ENCODE measurements at regions of chr11 and their contacts with region 1.

Region 1: DNA sequence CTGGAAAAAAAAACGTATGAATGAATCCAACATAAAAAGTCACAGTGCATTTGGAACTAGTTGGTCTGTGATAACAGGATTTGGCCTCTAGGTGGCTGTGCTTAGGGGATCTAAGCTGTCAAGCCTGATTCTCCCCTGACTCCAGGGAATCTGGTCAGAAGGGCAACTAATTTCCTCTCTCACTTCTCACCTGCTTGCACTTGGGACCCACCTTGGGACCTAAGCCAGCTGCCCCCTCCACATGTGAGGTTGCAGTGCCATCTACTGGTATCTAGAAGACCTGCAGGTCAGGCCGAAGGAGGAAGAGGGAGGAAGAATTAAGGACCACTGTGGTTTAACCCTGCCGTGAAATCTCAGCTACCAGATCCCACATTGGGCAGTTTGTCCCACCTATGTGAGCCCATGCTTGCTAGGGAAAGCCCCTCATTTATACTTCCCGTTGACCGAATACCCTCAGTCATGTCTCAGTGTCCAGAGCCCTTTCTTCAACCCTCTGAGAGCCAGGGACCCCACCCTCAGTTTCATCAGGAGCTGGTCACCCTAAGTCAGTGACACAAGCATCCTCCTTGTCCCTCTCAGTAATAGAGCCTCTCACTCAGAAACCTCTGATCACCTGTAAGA is 33.2 kb upstream of the CAVIN3 start:
- DNase-seq: peak in 2 of 3 donors; percentile 65 to 69
- ATAC-seq: peak; percentile 93
- H3K4me3 ChIP-seq: no peak overlapping the region
- H3K4me1 ChIP-seq: no peaks in the 10 kb centered on the region
- CTCF ChIP-seq: peak; percentile 84

Region 2: GRCh38 chr11:6022956-6023355 is 330.5 kb before region 1 on chr11:
- intact Hi-C with region 1: loop called in 1 of 2 experiments (anchors 10 kb)
- DNase-seq: peak in 1 of 3 donors; percentile 59
- ATAC-seq: peak; percentile 55
- H3K4me3 ChIP-seq: no peak overlapping the region
- H3K4me1 ChIP-seq: no peaks in the 10 kb centered on the region
- CTCF ChIP-seq: no peak

Measured in mucosa of descending colon (tissue), 3 donors.